ENCODE measurements at regions of chr5 and their contacts with region 1.

Region 1: GRCh38 chr5:111237470-111237869 is 13.3 kb downstream of the CAMK4 start:
- DNase-seq: peak in 1 of 14 experiments; percentile 46
- ATAC-seq: no peak
- H3K4me3 ChIP-seq: peak overlapping the region; percentile 9
- H3K4me3 Mint-ChIP-seq: peak overlapping the region; percentile 80
- H3K27ac ChIP-seq: peak overlapping the region; percentile 62 to 75
- H3K27ac Mint-ChIP-seq: peak overlapping the region; percentile 90
- H3K4me1 ChIP-seq: peaks cover 55% of the 10 kb centered on the region
- H3K4me1 Mint-ChIP-seq: peaks cover 97% of the 10 kb centered on the region
- H3K27me3 ChIP-seq: no peaks in the 10 kb centered on the region
- H3K27me3 Mint-ChIP-seq: no peaks in the 10 kb centered on the region
- CTCF ChIP-seq: no peak

Region 2: GRCh38 chr5:111254613-111255012 is 17.1 kb after region 1 on chr5:
- CTCF ChIA-PET with region 1: interaction called, 10 read pairs
- POLR2A ChIA-PET with region 1: interaction called, 27 read pairs
- intact Hi-C with region 1: loop called in 1 of 2 experiments (anchors 2 kb)
- DNase-seq: peak in 9 of 14 experiments; percentile 17 to 93 (median 51)
- ATAC-seq: peak; percentile 80
- H3K4me3 ChIP-seq: no peak overlapping the region
- H3K4me3 Mint-ChIP-seq: peak overlapping the region; percentile 72
- H3K27ac ChIP-seq: peak overlapping the region; percentile 62 to 68
- H3K27ac Mint-ChIP-seq: peak overlapping the region; percentile 87
- H3K4me1 ChIP-seq: peaks cover 44% of the 10 kb centered on the region
- H3K4me1 Mint-ChIP-seq: peaks cover 67% of the 10 kb centered on the region
- H3K27me3 ChIP-seq: no peaks in the 10 kb centered on the region
- H3K27me3 Mint-ChIP-seq: no peaks in the 10 kb centered on the region
- CTCF ChIP-seq: no peak